WTC11 (cell line): ENCODE measurements at regions of chr16 and their contacts with region 1.

Region 1: DNA sequence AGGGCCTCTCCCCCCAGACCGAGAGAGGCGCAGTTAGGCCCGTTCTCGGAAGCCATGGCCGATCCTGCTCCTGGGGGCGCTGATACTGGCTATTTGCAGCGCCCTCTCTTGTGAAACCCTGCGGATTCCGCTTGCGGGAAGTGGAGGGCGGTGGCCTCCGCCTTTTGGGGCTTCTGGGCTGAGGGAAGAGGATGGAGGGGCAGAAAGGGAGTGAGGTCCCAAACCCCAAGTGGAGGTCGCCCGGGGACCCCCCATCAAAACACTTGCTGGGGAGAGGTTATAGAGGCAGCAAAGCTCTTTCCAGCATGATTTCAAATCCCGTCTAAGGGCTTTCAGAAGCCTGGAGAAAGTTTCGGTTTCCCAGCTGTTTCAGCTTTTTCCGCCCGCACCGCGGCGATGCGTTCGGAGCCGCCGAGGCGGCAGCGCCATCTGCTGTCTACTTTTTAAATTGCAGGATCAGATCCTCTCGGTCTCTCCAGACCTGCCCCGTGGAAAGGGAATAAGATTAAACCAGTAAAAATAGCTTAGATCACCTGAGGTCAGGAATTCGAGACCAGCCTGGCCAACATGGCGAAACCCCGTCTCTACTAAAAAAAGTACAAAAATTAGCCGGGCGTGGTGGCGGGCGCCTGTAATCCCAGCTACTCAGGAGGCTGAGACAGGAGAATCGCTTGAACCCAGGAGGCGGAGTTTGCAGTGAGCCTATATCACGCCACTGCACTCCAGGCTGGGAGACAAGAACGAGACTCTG is 15.8 kb downstream of the SNX20 start:
- DNase-seq: peak; percentile 89
- ATAC-seq: peak; percentile 81
- H3K4me3 Mint-ChIP-seq: peak overlapping the region; percentile 70
- H3K27ac Mint-ChIP-seq: peak overlapping the region; percentile 50; the same call in 1 of the 2 replicates
- H3K4me1 Mint-ChIP-seq: peaks cover 16% of the 10 kb centered on the region
- H3K27me3 Mint-ChIP-seq: peaks cover 5% of the 10 kb centered on the region
- CTCF ChIP-seq: peak; percentile 86

Region 2: GRCh38 chr16:50448501-50448900 is 216.8 kb before region 1 on chr16:
- CTCF ChIA-PET with region 1: interaction called, 12 read pairs
- POLR2A ChIA-PET with region 1: no interaction called
- DNase-seq: peak; percentile 50
- ATAC-seq: peak; percentile 95
- H3K4me3 Mint-ChIP-seq: no peak overlapping the region
- H3K27ac Mint-ChIP-seq: 0 out of 2 replicates have a peak overlapping the region, but pooled peaks have one; percentile 15
- H3K4me1 Mint-ChIP-seq: peaks cover 52% of the 10 kb centered on the region
- H3K27me3 Mint-ChIP-seq: peaks cover 4% of the 10 kb centered on the region
- CTCF ChIP-seq: peak; percentile 23; the same call in 1 of the 2 replicates

Region 3: GRCh38 chr16:50593410-50594150 is 71.7 kb before region 1 on chr16:
- CTCF ChIA-PET with region 1: interaction called, 145 read pairs
- POLR2A ChIA-PET with region 1: interaction called, 4 read pairs
- DNase-seq: peak; percentile 71
- ATAC-seq: peak; percentile 88
- H3K4me3 Mint-ChIP-seq: no peak overlapping the region
- H3K27ac Mint-ChIP-seq: peak overlapping the region; percentile 74; the same call in 1 of the 2 replicates
- H3K4me1 Mint-ChIP-seq: peaks cover 28% of the 10 kb centered on the region
- H3K27me3 Mint-ChIP-seq: no peaks in the 10 kb centered on the region
- CTCF ChIP-seq: 0 out of 2 replicates have a peak, but pooled peaks have one; percentile 19

Region 4: DNA sequence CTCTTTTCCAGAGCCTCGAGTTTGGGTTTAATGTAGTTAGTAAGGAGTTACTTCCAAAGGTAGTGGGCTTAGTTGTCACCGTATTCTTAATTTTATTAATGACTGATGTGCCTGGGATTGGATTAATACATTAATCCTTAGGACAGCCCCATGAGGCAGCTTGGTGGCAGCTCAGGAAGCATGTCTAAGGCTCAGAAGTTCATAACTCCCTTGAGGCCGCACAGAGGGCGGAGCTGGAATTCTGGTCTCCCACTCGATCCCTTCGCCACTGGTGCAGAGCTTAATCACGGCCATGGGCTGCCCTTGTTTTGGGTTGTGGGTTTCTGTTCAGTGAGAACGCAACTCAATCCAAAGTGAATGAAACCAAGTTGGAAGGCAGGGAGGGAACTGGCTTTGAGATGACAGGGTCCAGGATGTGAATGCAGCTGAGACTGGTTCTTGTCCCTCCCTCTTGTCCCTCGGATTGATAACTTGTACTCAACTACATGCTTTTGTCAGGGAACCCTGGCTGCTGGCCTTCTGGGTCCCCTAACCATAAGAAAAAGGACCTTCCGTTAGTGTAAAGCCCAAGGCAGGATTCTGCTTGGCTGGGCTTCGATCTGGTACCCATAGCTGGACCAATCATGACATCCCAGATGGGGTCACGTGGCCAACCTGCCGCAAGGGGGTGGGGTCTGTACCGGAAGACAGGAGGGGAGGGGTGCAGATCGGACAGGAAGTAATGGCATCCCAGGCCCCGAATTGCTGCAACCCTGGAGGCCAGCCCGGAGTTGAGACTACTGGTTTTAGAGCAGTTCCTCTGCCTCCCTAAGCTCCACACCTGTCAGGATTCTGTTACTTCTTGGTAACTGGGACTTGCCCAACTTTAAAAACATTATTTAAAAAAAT is 29.6 kb before region 1 on chr16:
- CTCF ChIA-PET with region 1: interaction called, 21 read pairs
- POLR2A ChIA-PET with region 1: no interaction called
- DNase-seq: peak; percentile 35
- ATAC-seq: peak; percentile 83
- H3K4me3 Mint-ChIP-seq: no peak overlapping the region
- H3K27ac Mint-ChIP-seq: no peak overlapping the region
- H3K4me1 Mint-ChIP-seq: no peaks in the 10 kb centered on the region
- H3K27me3 Mint-ChIP-seq: no peaks in the 10 kb centered on the region
- CTCF ChIP-seq: no peak

Region 5: DNA sequence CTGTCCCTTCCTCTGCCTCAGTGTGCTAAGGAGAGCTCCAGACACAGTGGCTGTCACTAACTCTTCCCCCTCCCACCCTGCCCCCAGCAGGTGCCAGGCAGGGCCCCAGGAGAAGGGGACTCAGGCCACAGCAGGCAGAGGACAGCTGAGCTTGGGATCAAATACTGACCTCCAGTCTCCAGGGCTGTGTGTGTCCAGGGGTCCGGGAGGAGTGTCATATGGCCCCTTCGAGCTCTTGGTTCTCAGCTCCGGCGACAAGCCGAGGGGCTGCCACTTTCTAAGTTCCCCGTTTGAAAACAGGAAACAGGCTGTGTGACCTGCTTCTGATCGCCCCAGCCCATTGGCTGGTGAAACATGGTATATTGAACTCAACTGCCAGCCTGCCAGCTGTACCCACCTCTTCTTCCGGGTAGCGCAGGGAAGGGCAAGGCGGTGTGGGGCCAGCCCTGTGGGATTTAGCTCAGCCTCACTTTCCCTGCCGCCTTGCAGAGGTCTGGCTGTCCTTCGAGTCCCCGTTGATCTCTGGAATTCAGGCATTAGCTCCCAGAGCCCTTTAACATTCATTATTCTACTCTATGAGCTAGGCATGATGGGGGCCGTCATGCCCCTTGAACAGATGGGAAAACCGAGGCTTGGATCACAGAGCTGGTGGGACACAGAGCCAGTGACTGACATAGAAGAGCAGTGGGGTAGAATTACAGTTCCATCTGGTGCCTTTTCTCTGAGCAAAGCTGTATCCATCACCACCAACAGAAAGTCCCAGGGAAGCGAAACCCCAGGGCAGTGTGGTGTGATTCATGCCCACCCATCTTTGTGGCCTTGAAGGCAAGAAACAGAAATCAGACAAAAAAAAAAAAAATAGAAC is 15.9 kb after region 1 on chr16 and contains the start of gene SNX20:
- CTCF ChIA-PET with region 1: interaction called, 101 read pairs
- POLR2A ChIA-PET with region 1: no interaction called
- DNase-seq: no peak
- ATAC-seq: no peak
- H3K4me3 Mint-ChIP-seq: no peak within 1 kb of the TSS
- H3K27ac Mint-ChIP-seq: no peak within 1 kb of the TSS
- H3K4me1 Mint-ChIP-seq: no peaks in the 10 kb centered on the region
- H3K27me3 Mint-ChIP-seq: no peaks in the 10 kb centered on the region
- CTCF ChIP-seq: no peak
- total RNA-seq, gene SNX20: 0.14 TPM in 1 of 3 replicates, not detected in the others